Right cardiac atrium (tissue), 5 donors: ENCODE measurements at regions of chr4 and their contacts with region 1.

Region 1: DNA sequence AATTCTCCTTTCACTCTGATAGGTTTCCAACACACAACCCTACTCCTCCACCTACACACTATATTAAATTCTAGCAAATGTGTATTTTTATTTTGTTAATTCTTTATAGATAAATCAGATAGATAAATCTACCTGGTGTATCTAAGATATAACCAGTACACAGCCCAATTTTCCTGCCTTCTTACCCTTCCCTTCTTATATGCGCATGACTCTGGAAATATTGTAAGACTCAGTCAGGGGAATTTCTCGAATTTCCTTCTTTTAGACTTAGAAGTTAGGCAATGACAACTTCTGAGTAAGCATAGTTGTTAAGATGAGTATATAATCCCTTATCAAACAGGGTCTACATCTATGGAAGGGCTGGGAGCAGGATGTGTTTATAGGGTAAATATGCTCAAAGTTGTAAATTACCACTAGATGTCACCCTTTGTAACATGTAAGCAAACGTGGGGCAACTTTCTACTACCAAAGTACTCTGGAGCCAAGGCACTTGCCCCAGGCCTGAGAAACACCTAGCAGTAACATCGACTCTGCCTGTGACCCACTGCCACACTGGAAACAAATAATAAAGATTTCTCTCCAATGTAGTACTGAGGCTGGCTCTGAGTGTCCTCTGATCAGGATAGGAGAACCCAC is 444.7 kb downstream of the IQCM start:
- DNase-seq: no peak
- ATAC-seq: peak in 1 of 2 donors; percentile 50
- H3K4me3 ChIP-seq: no peak overlapping the region
- H3K27ac ChIP-seq: no peak overlapping the region
- H3K4me1 ChIP-seq: no peaks in the 10 kb centered on the region
- H3K27me3 ChIP-seq: no peaks in the 10 kb centered on the region

Region 2: GRCh38 chr4:149095811-149096210 is 275.1 kb before region 1 on chr4:
- intact Hi-C with region 1: no loop called
- DNase-seq: no peak
- ATAC-seq: no peak
- H3K4me3 ChIP-seq: no peak overlapping the region
- H3K27ac ChIP-seq: no peak overlapping the region
- H3K4me1 ChIP-seq: no peaks in the 10 kb centered on the region
- H3K27me3 ChIP-seq: no peaks in the 10 kb centered on the region

Region 3: GRCh38 chr4:149426461-149426860 is 55.6 kb after region 1 on chr4:
- intact Hi-C with region 1: no loop called
- DNase-seq: no peak
- ATAC-seq: no peak
- H3K4me3 ChIP-seq: no peak overlapping the region
- H3K27ac ChIP-seq: no peak overlapping the region
- H3K4me1 ChIP-seq: no peaks in the 10 kb centered on the region
- H3K27me3 ChIP-seq: no peaks in the 10 kb centered on the region

Region 4: GRCh38 chr4:149897783-149898182 is 526.9 kb after region 1 on chr4:
- intact Hi-C with region 1: loop called in 2 of 4 experiments (anchors 5 kb)
- DNase-seq: no peak
- ATAC-seq: no peak
- H3K4me3 ChIP-seq: no peak overlapping the region
- H3K27ac ChIP-seq: no peak overlapping the region
- H3K4me1 ChIP-seq: no peaks in the 10 kb centered on the region
- H3K27me3 ChIP-seq: no peaks in the 10 kb centered on the region